ENCODE measurements at regions of chr20 and their contacts with region 1.

Region 1: GRCh38 chr20:60921022-60921622 is 330.9 kb upstream of the CDH4 start:
- DNase-seq: no peak
- H3K4me3 ChIP-seq: no peak overlapping the region
- H3K27ac ChIP-seq: no peak overlapping the region
- H3K4me1 ChIP-seq: no peaks in the 10 kb centered on the region
- H3K27me3 ChIP-seq: no peaks in the 10 kb centered on the region
- CTCF ChIP-seq: no peak
- POLR2A ChIP-seq: no peak

Region 2: DNA sequence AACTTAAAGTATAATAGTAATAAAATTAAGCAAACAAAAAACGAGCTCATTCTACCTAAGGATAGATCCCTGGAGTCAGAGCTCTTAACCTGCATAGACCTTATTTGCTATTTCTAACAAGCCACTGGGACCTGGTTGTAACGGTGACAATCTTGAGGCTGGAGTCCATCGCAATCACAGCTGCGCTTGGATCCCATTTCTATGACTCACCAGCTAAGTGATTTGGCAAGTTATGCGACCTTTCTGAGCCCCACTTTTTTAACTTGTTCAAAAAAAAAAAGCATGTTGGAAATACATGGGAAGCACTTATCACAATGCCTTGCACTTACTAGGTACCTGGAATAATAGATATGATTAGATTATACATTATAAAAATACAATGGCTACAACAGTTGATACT is 58.5 kb before region 1 on chr20:
- CTCF ChIA-PET with region 1: no interaction called
- POLR2A ChIA-PET with region 1: no interaction called
- dilution Hi-C with region 1: no loop called
- intact Hi-C with region 1: loop called (anchors 2 kb)
- DNase-seq: no peak
- H3K4me3 ChIP-seq: no peak overlapping the region
- H3K27ac ChIP-seq: no peak overlapping the region
- H3K4me1 ChIP-seq: no peaks in the 10 kb centered on the region
- H3K27me3 ChIP-seq: no peaks in the 10 kb centered on the region
- CTCF ChIP-seq: no peak
- POLR2A ChIP-seq: no peak

Region 3: DNA sequence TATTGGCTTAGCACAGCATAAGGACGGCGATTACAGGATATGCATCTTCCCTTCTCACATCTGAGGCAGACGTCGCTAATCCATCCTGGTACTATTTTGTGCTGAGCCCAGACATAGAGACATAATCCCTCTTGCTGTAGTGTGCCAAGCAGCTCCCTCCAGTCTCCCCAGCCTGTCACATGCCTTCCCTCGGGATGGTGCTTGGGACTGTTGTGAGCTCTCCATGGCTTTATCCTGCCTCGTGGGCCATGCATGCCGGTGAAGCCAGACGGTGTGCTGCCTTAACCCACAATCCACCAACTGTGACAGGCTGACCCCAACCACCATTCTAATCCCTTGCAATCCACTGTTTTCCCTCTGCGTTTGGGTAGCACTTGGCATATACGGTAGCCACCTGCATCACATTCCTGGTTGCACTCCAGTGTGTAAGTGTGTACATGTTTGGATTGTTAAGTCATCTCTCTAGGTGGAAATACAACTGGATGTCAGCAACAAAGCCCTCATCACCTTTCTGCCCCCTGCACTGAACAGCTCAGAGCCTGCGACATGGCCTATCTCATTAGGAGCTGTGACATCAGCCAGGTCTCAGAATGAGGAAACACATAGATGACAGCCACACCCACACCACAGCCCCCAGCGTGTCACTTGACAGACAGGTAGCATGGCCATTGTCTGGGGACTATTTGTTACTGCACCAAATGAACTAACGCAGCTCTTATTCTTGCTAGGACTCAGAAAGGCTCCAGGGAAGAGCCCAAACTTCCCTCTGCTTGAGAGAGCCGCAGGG is 43.9 kb before region 1 on chr20:
- CTCF ChIA-PET with region 1: no interaction called
- POLR2A ChIA-PET with region 1: no interaction called
- dilution Hi-C with region 1: no loop called
- intact Hi-C with region 1: no loop called
- DNase-seq: no peak
- H3K4me3 ChIP-seq: no peak overlapping the region
- H3K27ac ChIP-seq: no peak overlapping the region
- H3K4me1 ChIP-seq: no peaks in the 10 kb centered on the region
- H3K27me3 ChIP-seq: no peaks in the 10 kb centered on the region
- CTCF ChIP-seq: no peak
- POLR2A ChIP-seq: no peak

Region 4: GRCh38 chr20:60993433-60994044 is 72.4 kb after region 1 on chr20:
- CTCF ChIA-PET with region 1: no interaction called
- POLR2A ChIA-PET with region 1: no interaction called
- dilution Hi-C with region 1: no loop called
- intact Hi-C with region 1: no loop called
- DNase-seq: no peak
- H3K4me3 ChIP-seq: no peak overlapping the region
- H3K27ac ChIP-seq: no peak overlapping the region
- H3K4me1 ChIP-seq: no peaks in the 10 kb centered on the region
- H3K27me3 ChIP-seq: no peaks in the 10 kb centered on the region
- CTCF ChIP-seq: no peak
- POLR2A ChIP-seq: no peak